ENCODE measurements at regions of chr13 and their contacts with region 1.

Region 1: DNA sequence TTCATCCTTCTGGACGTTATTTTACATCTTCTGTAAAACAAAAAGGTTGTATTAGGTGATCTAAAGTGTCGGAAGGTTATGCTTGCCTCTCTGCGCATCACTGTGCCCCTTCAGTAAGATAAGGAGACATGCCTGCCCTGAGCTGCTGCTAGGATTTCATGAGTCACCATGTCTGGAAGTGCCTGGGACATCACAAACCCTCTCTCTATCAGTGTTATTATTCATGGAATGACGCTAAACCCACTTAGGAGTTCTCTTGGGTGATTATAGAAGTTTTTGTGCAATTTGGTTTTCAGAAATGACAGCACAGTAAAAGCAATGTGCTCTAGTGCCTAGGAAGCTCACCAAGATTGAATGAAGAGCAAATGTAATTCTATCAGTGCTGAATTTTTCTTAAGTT is 617.7 kb downstream of the DCT start:
- DNase-seq: no peak
- ATAC-seq: no peak
- H3K4me3 Mint-ChIP-seq: no peak overlapping the region
- H3K27ac Mint-ChIP-seq: no peak overlapping the region
- H3K4me1 Mint-ChIP-seq: no peaks in the 10 kb centered on the region
- H3K27me3 Mint-ChIP-seq: no peaks in the 10 kb centered on the region

Region 2: GRCh38 chr13:93589788-93590187 is 272.0 kb before region 1 on chr13:
- POLR2A ChIA-PET with region 1: interaction called, 11 read pairs
- DNase-seq: no peak
- ATAC-seq: no peak
- H3K4me3 Mint-ChIP-seq: no peak overlapping the region
- H3K27ac Mint-ChIP-seq: no peak overlapping the region
- H3K4me1 Mint-ChIP-seq: no peaks in the 10 kb centered on the region
- H3K27me3 Mint-ChIP-seq: no peaks in the 10 kb centered on the region

Region 3: GRCh38 chr13:93882086-93882651 is 20.4 kb after region 1 on chr13:
- POLR2A ChIA-PET with region 1: no interaction called
- DNase-seq: no peak
- ATAC-seq: no peak
- H3K4me3 Mint-ChIP-seq: no peak overlapping the region
- H3K27ac Mint-ChIP-seq: no peak overlapping the region
- H3K4me1 Mint-ChIP-seq: no peaks in the 10 kb centered on the region
- H3K27me3 Mint-ChIP-seq: no peaks in the 10 kb centered on the region

Measured in activated naive CD8-positive, alpha-beta T cell treated with anti-CD3 and anti-CD28 coated beads, Interleukin-2, amount 10 ng/mL, durations not matched to agents 7 days and 5 days (primary cell).